ENCODE measurements at regions of chr9 and their contacts with region 1.

Region 1: DNA sequence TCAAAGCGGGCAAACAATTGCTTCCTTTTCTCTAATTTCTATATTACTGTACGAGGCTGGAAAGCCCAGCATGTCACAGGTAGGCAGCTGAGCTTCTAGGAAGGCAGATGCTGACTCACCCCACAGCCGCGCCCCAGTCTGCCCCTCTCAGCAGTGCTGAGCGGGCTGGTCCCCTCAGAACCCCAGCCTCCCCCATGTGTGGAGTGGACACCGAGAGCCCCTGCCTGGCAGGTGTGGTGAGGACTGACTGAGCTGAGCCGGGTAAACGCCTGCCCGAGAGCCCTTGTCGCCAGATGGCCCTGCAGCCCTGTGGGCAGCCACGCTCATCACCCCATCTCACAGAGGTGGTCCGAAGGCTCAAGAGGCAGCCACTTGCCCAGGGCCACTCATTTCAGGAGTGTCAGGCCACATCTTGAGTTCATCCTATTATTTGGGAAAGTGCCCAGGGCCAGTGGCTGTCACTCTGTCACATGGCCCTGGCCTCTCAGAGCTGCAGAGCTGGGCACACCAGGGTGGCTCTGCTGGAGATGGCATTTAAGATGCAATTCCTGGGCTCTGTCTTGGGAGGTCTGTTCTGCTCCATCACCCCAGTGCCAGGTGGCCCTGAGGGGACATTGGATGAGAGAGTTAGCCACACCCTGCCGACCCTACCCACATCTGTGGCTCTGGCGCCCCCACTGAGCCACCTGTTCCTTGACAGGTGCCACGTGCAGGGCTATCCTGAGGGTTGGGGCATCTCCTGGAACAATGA is 12.4 kb downstream of the CARD19 start:
- DNase-seq: peak; percentile 29
- H3K4me3 ChIP-seq: no peak overlapping the region
- H3K27ac ChIP-seq: no peak overlapping the region
- H3K4me1 ChIP-seq: peaks cover 33% of the 10 kb centered on the region
- CTCF ChIP-seq: no peak

Region 2: GRCh38 chr9:92954049-92954861 is 154.2 kb before region 1 on chr9:
- CTCF ChIA-PET with region 1: no interaction called
- POLR2A ChIA-PET with region 1: no interaction called
- intact Hi-C with region 1: loop called (anchors 1 kb)
- DNase-seq: peak; percentile 24
- H3K4me3 ChIP-seq: no peak overlapping the region
- H3K27ac ChIP-seq: no peak overlapping the region
- H3K4me1 ChIP-seq: peaks cover 9% of the 10 kb centered on the region
- CTCF ChIP-seq: no peak

Region 3: DNA sequence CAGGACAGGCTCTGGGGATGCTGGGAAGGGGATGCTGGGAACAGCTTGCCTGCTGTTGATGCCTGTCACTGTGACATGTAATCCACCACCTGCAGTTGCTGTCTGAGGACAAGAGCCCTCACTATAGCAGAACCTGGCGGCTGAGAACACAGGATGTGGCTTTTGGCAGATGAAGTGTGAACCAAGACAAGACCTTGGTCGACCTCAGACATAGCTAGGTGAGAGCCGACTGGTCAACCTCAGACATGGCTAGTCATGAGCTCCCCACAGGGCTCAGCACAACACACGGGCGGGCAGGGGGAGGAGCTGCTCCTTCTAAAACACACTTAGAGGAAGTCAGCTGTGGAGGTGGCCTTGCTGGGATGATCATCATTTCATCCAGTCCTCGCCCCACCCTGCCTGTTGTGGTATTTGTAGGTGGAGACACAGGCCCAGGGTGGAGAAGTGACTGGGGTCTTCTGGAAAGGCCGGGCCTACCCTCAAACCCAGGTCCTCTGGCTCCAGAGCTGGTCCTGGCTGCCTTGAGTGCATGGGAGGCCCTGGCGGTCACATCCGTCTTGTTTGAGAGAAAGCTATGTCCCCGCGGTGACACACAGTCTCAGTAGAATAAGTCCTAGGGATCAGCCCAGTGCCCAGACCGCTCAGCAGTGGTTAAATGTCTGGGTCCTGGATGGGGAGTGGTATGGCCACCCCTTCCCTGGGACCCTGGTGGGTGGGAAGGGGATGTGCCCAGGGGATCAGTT is 43.9 kb before region 1 on chr9:
- CTCF ChIA-PET with region 1: no interaction called
- POLR2A ChIA-PET with region 1: interaction called, 3 read pairs
- intact Hi-C with region 1: loop called (anchors 1 kb)
- DNase-seq: peak; percentile 98
- H3K4me3 ChIP-seq: peak overlapping the region; percentile 79
- H3K27ac ChIP-seq: peak overlapping the region; percentile 95
- H3K4me1 ChIP-seq: peaks cover 61% of the 10 kb centered on the region
- CTCF ChIP-seq: no peak

Region 4: DNA sequence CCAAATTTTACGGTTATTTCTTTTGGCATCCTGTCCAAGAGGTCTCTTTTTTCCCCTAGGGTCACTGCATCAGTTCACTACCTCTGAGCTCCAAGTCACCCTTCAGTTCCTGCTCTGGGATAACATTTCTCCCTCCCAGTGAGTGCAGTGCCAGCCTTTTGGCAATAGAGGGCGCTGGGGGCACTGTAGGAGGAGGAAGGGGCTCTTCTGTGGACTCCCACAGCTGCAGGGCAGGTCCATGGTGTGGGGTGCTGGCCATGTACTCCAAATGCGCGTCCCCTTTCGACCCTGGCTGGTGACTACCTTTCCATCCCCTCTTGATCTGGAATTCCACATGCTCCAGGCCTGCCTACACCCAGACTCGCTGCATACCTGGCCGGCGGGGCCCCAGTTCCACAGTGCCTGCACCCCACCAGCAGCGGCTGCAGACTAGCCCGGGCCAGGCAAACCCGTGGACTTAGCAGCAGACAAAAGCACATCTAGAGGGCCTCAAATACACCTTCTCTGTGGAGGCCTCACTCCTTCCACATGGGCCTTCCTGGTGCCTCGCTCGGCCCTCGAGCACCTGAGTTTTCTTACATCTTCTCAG is 45.9 kb after region 1 on chr9:
- CTCF ChIA-PET with region 1: no interaction called
- POLR2A ChIA-PET with region 1: interaction called, 3 read pairs
- intact Hi-C with region 1: loop called (anchors 1 kb)
- DNase-seq: peak; percentile 71
- H3K4me3 ChIP-seq: no peak overlapping the region
- H3K27ac ChIP-seq: no peak overlapping the region
- H3K4me1 ChIP-seq: peaks cover 15% of the 10 kb centered on the region
- CTCF ChIP-seq: peak; percentile 96

Region 5: DNA sequence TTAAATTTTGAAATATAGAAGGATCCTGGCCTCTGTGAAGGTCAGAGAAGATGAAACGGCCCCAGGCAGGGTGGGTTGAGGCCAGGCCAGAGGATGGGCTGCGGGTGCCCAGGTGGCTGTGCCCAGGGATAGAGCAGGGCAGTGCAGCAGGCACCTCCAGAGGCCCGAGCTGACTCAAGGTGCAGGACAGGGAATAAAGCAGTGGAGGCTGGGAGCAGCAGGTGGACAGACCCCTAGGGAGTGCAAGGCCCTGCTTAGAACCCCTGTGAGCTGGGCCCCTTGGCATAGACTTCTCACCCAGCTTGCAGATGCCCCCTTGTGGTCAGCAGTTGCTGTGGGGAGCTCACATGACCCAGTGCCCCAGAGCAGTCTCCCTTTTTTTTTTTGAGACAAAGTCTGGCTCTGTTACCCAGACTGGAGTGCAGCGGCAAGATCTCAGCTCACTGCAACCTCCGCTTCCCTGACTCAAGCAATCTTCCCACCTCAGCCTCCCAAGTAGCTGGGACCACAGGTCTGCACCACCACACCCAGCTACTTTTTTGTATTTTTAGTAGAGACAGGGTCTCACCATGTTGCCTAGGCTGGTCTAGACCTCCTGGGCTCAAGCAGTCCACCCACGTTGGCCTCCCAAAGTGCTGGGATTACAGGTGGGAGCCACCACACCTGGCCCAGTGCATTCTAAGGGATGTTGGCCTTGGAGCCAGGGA is 194.2 kb after region 1 on chr9:
- CTCF ChIA-PET with region 1: no interaction called
- POLR2A ChIA-PET with region 1: no interaction called
- intact Hi-C with region 1: loop called (anchors 1 kb)
- DNase-seq: peak; percentile 86
- H3K4me3 ChIP-seq: no peak overlapping the region
- H3K27ac ChIP-seq: peak overlapping the region; percentile 61
- H3K4me1 ChIP-seq: peaks cover 52% of the 10 kb centered on the region
- CTCF ChIP-seq: peak; percentile 79

Region 6: GRCh38 chr9:93962561-93963440 is 854.3 kb after region 1 on chr9:
- CTCF ChIA-PET with region 1: no interaction called
- POLR2A ChIA-PET with region 1: no interaction called
- intact Hi-C with region 1: loop called (anchors 10 kb)
- DNase-seq: peak; percentile 84
- H3K4me3 ChIP-seq: no peak overlapping the region
- H3K27ac ChIP-seq: no peak overlapping the region
- H3K4me1 ChIP-seq: no peaks in the 10 kb centered on the region
- CTCF ChIP-seq: peak; percentile 95